ENCODE measurements at regions of chr17 and their contacts with region 1.

Region 1: DNA sequence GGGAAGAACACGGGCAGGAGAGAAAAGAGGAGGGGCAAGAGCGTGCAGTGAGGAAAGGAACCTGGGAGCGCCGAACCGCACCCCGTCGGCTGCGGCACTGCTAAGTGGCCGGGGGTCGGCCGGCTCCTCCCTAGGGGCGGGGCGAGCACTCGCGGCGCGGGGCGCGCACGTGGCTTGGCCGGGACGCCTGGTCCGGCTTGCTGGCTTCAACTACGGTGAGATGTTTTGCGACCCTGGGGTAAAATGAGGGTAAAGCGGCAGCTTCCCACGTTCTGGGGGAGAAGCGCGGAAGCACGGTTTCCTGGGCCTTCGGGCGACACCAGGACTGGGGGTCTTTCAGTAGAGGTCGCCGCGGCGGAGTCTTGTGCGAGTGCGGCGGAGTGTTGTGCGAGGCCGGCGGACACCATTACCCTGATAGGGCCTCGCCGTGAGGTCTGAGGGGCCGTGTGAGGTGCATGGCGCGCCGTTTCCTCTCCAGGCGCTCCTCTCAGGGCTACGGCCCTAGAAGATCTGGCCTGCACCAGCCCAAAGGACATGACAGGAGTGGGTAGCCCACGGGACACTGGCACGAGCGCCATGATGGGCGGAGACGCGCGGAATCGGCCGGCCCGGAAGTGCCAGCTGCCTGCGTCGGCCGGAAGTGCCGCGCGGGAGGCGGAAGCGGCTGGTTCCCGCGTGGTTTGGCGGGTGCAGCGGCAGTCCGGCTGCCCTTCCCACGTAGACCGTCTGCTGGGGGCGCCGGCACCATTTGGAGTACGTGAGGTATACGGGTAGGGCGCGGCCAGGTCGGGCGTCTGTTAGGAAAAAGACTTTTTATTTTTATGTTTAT is at the starts of genes MYO19 and PIGW:
- DNase-seq: peak; percentile 84
- H3K4me3 Mint-ChIP-seq: peak within 1 kb of the TSS; percentile 98
- H3K27ac Mint-ChIP-seq: peak within 1 kb of the TSS; percentile 98
- H3K4me1 Mint-ChIP-seq: peaks cover 24% of the 10 kb centered on the region
- H3K27me3 Mint-ChIP-seq: no peaks in the 10 kb centered on the region
- total RNA-seq, gene MYO19: 150 and 155 TPM in 2 replicates
- total RNA-seq, gene PIGW: 22.6 and 23.6 TPM in 2 replicates

Region 2: GRCh38 chr17:36486204-36487194 is 48.6 kb before region 1 on chr17 and contains the start of gene ZNHIT3:
- intact Hi-C with region 1: loop called (anchors 1 kb)
- DNase-seq: peak; percentile 90
- H3K4me3 Mint-ChIP-seq: peak within 1 kb of the TSS; percentile 99
- H3K27ac Mint-ChIP-seq: peak within 1 kb of the TSS; percentile 99
- H3K4me1 Mint-ChIP-seq: peaks cover 33% of the 10 kb centered on the region
- H3K27me3 Mint-ChIP-seq: peaks cover 10% of the 10 kb centered on the region
- total RNA-seq, gene ZNHIT3: 46.8 and 48.2 TPM in 2 replicates

Region 3: GRCh38 chr17:36500745-36501225 is 34.3 kb before region 1 on chr17:
- intact Hi-C with region 1: no loop called
- DNase-seq: no peak
- H3K4me3 Mint-ChIP-seq: no peak overlapping the region
- H3K27ac Mint-ChIP-seq: no peak overlapping the region
- H3K4me1 Mint-ChIP-seq: no peaks in the 10 kb centered on the region
- H3K27me3 Mint-ChIP-seq: no peaks in the 10 kb centered on the region

Region 4: DNA sequence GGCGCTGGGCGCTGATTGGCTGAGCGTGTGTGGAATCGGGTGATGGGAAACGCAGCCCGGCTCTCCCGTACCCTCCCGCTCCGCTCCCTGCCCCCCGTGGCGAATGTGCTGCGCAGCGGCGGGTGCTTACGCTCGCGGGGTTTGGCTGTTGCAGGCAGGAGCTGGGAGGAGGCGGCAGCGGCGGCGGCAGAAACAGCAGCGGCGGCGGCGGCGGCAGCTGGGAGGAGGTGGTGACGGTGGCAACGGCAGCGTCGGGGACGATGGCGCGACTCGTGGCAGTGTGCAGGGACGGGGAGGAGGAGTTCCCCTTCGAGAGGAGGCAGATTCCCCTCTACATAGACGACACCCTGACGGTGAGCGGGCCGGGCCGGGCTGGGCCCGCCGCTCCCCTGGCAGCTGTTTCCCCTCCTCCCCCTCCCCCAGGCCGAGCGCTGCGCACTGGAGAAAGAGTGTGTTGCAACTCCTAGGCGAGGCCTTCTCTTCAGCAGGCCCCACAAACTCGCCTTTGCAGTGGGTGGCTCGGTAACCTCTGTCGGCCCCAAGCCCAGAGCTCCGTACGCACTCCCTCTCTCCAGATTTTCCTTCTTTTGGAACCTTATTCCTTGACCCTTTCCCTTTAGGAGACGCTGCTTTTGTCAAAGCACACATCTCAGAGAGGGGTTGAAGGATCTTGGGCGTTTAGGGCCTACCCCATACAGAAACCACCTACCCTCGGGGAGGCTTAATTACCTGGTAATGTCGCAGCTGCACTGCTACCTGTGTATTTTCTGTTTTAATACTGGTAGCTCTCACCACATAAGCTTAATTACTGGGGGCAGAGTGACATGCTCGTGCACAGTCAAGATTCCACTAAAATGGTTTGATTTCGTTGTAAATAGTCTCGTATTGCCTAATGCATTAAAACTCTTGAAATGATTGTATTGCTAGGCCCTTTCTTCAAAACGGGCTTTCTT is 10.7 kb after region 1 on chr17:
- intact Hi-C with region 1: loop called (anchors 1 kb)
- DNase-seq: peak; percentile 96
- H3K4me3 Mint-ChIP-seq: peak overlapping the region; percentile 90
- H3K27ac Mint-ChIP-seq: peak overlapping the region; percentile 93
- H3K4me1 Mint-ChIP-seq: peaks cover 30% of the 10 kb centered on the region
- H3K27me3 Mint-ChIP-seq: no peaks in the 10 kb centered on the region

Region 5: GRCh38 chr17:36722121-36722902 is 187.3 kb after region 1 on chr17:
- intact Hi-C with region 1: loop called (anchors 5 kb)
- DNase-seq: peak; percentile 81
- H3K4me3 Mint-ChIP-seq: peak overlapping the region; percentile 80
- H3K27ac Mint-ChIP-seq: peak overlapping the region; percentile 99
- H3K4me1 Mint-ChIP-seq: peaks cover 52% of the 10 kb centered on the region
- H3K27me3 Mint-ChIP-seq: no peaks in the 10 kb centered on the region